ENCODE measurements at regions of chr14 and their contacts with region 1.

Region 1: DNA sequence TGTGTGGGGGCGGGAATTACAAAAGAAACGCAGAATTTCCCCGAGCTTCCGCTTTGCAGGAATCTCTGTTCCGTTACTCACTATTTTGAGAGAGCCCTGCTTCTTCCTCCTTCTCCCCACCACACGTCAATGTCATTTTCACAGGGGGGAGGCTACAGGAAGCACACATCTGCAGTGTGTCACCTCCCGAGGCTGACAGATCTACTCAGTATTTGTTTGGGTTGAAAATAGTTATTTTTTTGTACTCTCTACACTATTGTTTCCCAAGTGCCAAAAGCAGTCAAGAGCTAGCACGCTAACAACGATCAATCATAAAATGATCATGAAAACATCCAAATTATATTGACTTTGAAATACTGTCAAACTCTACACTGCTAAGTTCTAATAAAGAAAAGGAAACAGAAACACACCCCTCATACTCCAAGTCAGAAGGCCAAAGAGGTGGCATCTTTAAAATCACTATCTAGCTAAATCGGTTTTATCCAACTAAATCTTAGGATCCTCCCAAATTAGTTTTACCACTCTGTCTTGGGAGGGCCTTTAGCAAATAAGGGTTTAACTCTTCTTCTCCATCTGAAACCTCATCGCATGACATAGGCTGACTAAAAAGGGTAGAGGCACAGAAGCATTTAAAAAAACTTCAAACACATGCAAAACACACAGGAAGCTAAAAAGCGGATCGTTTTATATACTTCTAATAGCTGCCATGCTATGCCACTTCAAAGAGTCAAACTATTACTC is 51.8 kb downstream of the FOXN3 start:
- DNase-seq: peak; percentile 75
- CTCF ChIP-seq: no peak

Region 2: GRCh38 chr14:89379006-89379405 is 13.8 kb after region 1 on chr14:
- CTCF ChIA-PET with region 1: interaction called, 11 read pairs
- POLR2A ChIA-PET with region 1: no interaction called
- DNase-seq: no peak
- CTCF ChIP-seq: no peak

Region 3: DNA sequence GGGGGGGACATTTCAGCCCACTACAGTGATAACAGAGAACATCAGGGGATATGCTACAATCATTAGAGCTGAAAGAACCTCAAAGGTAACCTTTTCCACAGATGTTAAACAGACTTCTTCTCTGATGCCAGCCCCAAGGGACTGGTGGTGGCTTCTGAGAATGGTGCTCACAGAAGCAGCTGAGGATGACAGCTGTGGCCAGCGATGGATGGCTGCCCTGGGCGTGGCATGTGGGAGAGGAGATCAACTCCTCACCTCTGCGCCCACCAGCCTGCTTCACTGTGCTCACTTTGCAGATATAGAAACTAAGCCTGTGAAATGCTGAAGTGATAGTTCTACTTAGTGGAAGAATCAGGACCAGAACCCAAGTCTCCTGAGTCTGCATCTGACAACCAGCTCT is 18.8 kb after region 1 on chr14:
- CTCF ChIA-PET with region 1: interaction called, 11 read pairs
- POLR2A ChIA-PET with region 1: no interaction called
- DNase-seq: peak; percentile 54
- CTCF ChIP-seq: no peak

Region 4: DNA sequence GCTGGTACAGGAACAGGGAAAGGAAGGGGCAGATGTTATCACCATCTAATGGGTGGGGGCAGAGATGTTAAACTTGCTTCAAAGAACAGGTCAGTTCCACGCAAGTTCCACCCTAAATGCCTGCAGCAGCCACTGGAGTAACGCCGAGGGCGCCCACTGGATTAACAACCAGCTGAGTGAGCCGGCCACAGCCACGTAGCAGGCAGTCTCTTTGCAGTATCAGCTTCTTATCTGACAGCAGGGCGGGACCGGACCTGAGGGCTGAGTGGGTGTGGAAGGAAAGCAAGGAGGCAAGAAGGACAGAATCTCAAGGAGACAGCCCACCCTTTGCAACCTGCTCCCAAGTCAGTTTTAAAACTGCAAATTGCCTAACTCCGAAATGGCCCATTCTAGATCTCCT is 90.2 kb after region 1 on chr14:
- CTCF ChIA-PET with region 1: no interaction called
- POLR2A ChIA-PET with region 1: no interaction called
- DNase-seq: no peak
- CTCF ChIP-seq: no peak